HepG2 (cell line): ENCODE measurements at regions of chr4 and their contacts with region 1.

Region 1: DNA sequence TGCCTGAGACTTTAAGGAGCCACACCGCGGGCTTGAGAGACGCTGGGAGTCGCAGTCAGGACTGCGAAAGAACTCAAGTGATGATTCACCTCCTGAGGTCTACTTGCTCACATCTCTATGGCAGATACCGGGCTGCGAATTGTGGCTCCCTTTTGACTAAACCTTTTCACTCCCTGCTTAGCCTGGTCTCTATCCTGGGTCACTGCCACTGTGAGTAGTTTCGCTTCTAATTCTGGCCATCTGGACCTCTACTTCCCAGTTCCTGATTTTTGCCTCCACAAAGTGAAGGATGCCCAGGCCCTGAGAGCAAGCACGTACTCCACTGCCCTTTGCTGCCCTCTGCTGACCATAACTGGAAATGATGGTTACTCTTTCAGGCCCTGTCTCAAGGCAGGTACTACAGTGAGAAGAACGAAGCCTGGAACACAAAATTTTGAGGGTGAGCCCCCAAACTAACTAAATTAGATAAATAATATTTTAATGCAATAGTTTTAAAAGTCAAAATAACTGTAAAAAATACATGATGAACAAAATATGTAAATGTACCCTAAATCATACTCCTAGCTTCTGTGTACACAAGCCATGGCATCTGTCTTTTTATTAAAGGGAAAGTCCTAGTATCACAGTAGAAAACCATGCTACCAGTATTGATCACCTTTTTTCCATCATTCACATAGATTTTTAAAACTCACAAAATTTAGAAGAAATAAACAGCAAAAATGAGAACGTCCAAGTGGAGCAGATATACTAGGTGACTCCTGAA is 16.7 kb downstream of the MAD2L1 start:
- DNase-seq: peak; percentile 62
- ATAC-seq: peak; percentile 99
- H3K4me3 ChIP-seq: no peak overlapping the region
- H3K27ac ChIP-seq: no peak overlapping the region
- H3K4me1 ChIP-seq: no peaks in the 10 kb centered on the region
- H3K27me3 ChIP-seq: no peaks in the 10 kb centered on the region
- CTCF ChIP-seq: peak; percentile 91
- EP300 ChIP-seq: no peak
- POLR2A ChIP-seq: no peak
- RAD21 ChIP-seq: peak; percentile 67

Region 2: DNA sequence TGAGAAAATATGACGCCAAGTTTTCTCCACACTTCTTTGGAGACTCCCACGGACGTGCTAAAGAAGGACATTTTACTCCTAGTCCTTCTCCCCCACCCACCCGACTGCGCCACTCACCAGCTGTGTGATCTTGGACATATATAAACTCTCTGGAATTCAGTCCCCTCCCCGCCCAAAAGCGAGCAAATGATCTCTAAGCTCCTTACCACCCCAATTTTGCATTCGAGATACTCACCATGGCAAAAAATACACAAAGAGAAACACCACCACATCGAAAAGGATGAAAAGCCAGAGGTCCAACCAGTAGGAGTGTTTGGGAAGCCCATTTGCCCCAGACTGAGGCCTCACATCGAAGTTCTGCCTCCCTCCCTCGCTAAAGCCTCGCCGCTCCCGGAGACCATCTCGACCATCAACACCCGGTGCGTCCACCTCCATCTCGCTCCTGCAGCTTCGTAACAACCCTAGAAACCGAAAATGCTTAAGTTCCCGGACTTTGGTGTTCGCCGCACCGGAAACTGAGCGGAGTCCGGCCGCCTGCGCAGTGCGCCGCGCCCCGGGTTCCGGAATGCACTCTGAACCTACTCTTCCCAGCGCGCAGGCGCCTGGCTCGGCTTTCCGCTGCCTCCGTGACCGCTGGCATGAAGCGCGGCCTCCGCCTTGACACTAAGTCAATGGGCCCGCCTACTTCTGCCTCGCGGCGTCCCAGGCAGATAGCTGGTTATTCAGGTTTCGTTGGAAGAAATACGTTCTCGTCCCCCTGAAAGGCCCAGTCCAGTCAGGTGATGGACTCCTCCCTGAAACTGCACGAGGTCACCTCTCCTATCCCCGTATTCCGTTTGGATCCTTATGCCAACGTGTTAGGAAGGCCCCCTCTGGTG is 749.6 kb before region 1 on chr4:
- CTCF ChIA-PET with region 1: no interaction called
- POLR2A ChIA-PET with region 1: no interaction called
- in situ Hi-C with region 1: no loop called
- intact Hi-C with region 1: loop called (anchors 5 kb)
- DNase-seq: peak; percentile 96
- ATAC-seq: peak; percentile 96
- H3K4me3 ChIP-seq: peak overlapping the region; percentile 85 to 100 (median 91)
- H3K27ac ChIP-seq: peak overlapping the region; percentile 89
- H3K4me1 ChIP-seq: peaks cover 66% of the 10 kb centered on the region
- H3K27me3 ChIP-seq: peaks cover 0 to 9% of the 10 kb centered on the region in 2 experiments; a peak in 2 of 5 replicates
- CTCF ChIP-seq: peak; percentile 53
- EP300 ChIP-seq: peak in 1 of 2 experiments; percentile 48; a peak in 2 of 4 replicates
- POLR2A ChIP-seq: peak; percentile 81 to 87
- RAD21 ChIP-seq: no peak

Region 3: GRCh38 chr4:119559044-119559647 is 490.8 kb before region 1 on chr4:
- CTCF ChIA-PET with region 1: interaction called, 14 read pairs
- POLR2A ChIA-PET with region 1: no interaction called
- in situ Hi-C with region 1: loop called (anchors 10 kb)
- intact Hi-C with region 1: loop called (anchors 1 kb)
- DNase-seq: peak; percentile 39
- ATAC-seq: no peak; the same call in 2 of the 3 replicates
- H3K4me3 ChIP-seq: no peak overlapping the region
- H3K27ac ChIP-seq: no peak overlapping the region
- H3K4me1 ChIP-seq: no peaks in the 10 kb centered on the region
- H3K27me3 ChIP-seq: no peaks in the 10 kb centered on the region
- CTCF ChIP-seq: peak; percentile 33; the same call in 1 of the 2 replicates
- EP300 ChIP-seq: no peak
- POLR2A ChIP-seq: no peak
- RAD21 ChIP-seq: no peak

Region 4: GRCh38 chr4:120286813-120287212 is 236.9 kb after region 1 on chr4:
- CTCF ChIA-PET with region 1: no interaction called
- POLR2A ChIA-PET with region 1: no interaction called
- in situ Hi-C with region 1: no loop called
- intact Hi-C with region 1: no loop called
- DNase-seq: no peak
- ATAC-seq: no peak
- H3K4me3 ChIP-seq: no peak overlapping the region
- H3K27ac ChIP-seq: no peak overlapping the region
- H3K4me1 ChIP-seq: no peaks in the 10 kb centered on the region
- H3K27me3 ChIP-seq: no peaks in the 10 kb centered on the region
- CTCF ChIP-seq: no peak
- EP300 ChIP-seq: no peak
- POLR2A ChIP-seq: no peak
- RAD21 ChIP-seq: no peak